Caco-2 (cell line): ENCODE measurements at regions of chr9 and their contacts with region 1.

Region 1: DNA sequence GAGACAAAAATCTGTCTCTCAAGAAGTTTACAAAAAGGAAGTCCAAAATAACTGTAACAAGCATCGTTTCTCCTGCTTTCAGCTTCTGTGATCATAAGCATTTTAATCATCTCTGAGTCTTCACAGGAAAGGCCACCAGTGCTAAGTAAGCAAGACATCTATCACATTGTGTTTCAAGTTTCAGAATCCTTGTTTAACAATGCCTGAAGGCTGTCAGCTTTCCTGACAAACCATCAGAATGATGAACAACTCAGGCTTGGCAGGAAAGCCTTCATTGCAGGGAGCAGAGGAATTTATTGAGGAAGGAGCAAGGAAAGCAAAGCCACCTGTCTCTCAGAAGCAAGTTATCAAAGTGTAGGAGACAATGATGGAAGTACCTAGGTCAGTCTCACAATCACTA is 143.5 kb upstream of the DAPK1 start:
- DNase-seq: peak in 1 of 2 experiments; percentile 48
- H3K4me3 ChIP-seq: no peak overlapping the region
- H3K4me3 Mint-ChIP-seq: no peak overlapping the region
- H3K27ac Mint-ChIP-seq: no peak overlapping the region
- H3K4me1 ChIP-seq: peaks cover 5% of the 10 kb centered on the region; the same call in 1 of the 2 replicates
- H3K4me1 Mint-ChIP-seq: peaks cover 4% of the 10 kb centered on the region
- H3K27me3 ChIP-seq: no peaks in the 10 kb centered on the region
- H3K27me3 Mint-ChIP-seq: no peaks in the 10 kb centered on the region
- CTCF ChIP-seq: no peak

Region 2: DNA sequence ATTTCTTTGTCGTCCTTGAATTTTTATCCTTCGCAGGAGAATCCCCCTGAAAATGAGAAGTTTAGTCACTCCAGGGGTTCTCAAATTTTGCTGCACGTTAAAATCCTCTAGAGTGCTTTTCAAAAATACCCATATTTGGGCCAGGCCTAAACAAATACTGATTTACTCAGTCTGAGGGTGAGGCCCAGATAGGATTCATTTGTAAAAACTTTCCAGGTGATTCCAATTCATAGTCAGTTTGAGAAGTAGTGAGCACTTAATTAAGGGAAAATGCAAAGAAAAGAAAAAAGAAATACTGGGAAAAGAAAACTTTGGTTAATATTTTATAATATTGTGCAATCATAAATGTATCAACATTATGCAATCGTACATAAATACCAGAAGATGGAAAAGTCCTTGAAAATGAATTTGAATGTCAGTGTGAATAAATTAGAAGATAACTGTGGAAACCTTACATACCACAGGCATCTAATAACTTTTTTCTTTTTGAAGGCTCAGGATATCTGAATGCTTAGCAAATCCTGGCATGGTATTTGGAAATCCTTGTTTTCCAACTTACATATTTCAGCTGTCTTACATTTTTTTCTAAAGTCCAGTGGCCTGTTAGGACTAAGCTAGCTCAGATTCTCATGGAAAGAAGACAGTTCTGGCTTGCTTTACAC is 27.0 kb after region 1 on chr9:
- CTCF ChIA-PET with region 1: no interaction called
- POLR2A ChIA-PET with region 1: no interaction called
- intact Hi-C with region 1: loop called (anchors 1 kb)
- DNase-seq: no peak
- H3K4me3 ChIP-seq: no peak overlapping the region
- H3K4me3 Mint-ChIP-seq: no peak overlapping the region
- H3K27ac Mint-ChIP-seq: no peak overlapping the region
- H3K4me1 ChIP-seq: peaks cover 26% of the 10 kb centered on the region
- H3K4me1 Mint-ChIP-seq: peaks cover 6% of the 10 kb centered on the region
- H3K27me3 ChIP-seq: no peaks in the 10 kb centered on the region
- H3K27me3 Mint-ChIP-seq: no peaks in the 10 kb centered on the region
- CTCF ChIP-seq: no peak